HCT116 (cell line): ENCODE measurements at regions of chr2 and their contacts with region 1.

Region 1: GRCh38 chr2:33372940-33373553 is 103.4 kb upstream of the RASGRP3 start:
- DNase-seq: peak; percentile 47
- ATAC-seq: peak; percentile 79
- H3K4me3 ChIP-seq: no peak overlapping the region
- H3K27ac ChIP-seq: no peak overlapping the region
- H3K4me1 ChIP-seq: no peaks in the 10 kb centered on the region
- H3K27me3 ChIP-seq: no peaks in the 10 kb centered on the region
- CTCF ChIP-seq: peak; percentile 75 to 78 (median 77); a peak in 5 of 6 replicates
- POLR2A ChIP-seq: no peak
- RAD21 ChIP-seq: peak; percentile 79

Region 2: GRCh38 chr2:32553829-32554432 is 819.1 kb before region 1 on chr2:
- CTCF ChIA-PET with region 1: no interaction called
- POLR2A ChIA-PET with region 1: no interaction called
- RAD21 ChIA-PET with region 1: no interaction called
- intact Hi-C with region 1: loop called (anchors 5 kb)
- DNase-seq: peak; percentile 12
- ATAC-seq: peak; percentile 88
- H3K4me3 ChIP-seq: no peak overlapping the region
- H3K27ac ChIP-seq: no peak overlapping the region
- H3K4me1 ChIP-seq: no peaks in the 10 kb centered on the region
- H3K27me3 ChIP-seq: no peaks in the 10 kb centered on the region
- CTCF ChIP-seq: peak; percentile 54 to 77 (median 74); a peak in 5 of 6 replicates
- POLR2A ChIP-seq: no peak
- RAD21 ChIP-seq: peak; percentile 66

Region 3: DNA sequence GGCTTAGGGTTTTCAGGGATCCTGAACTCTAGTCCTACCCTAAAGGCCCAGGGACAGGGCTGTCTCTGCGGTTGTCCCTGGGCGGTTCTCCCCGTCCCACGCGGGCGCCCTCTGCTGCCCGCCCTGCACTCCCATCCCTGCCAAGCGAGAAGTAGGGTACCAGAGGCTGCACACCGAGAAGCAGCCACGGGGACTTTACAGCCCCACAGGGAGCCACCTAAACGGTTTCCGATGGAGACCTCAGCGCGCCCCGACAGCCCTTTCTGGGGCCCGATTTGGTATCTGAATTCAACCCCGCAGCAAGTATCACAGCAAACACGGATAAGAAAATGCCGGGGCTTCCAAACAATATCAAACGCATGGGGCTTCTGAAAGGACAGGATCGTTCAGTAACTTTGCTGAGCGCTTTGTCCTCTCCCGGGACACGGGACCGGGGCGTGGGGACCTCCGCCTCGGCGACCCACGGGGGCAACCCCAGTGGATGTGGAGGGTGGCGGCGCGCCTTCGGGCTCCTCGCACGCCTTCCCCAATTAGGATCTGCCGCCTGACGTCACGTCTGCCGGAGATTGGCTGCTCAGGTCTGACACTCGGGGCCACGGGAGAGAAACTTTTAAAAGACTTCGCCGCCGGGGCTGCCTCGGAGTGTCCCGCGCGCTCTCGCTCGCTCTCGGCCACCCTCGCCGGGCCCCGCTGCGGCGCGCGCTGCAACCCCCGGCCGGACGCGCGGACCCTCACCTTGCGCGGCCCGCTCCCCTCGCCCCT is 426.6 kb before region 1 on chr2 and contains the start of gene LTBP1:
- CTCF ChIA-PET with region 1: no interaction called
- POLR2A ChIA-PET with region 1: no interaction called
- RAD21 ChIA-PET with region 1: no interaction called
- intact Hi-C with region 1: loop called (anchors 5 kb)
- DNase-seq: peak; percentile 45
- ATAC-seq: peak; percentile 86
- H3K4me3 ChIP-seq: peak within 1 kb of the TSS; percentile 47 to 63
- H3K27ac ChIP-seq: peak within 1 kb of the TSS; percentile 44; the same call in 1 of the 2 replicates
- H3K4me1 ChIP-seq: peaks cover 0 to 16% of the 10 kb centered on the region in 2 experiments; a peak in 2 of 4 replicates
- H3K27me3 ChIP-seq: no peaks in the 10 kb centered on the region
- CTCF ChIP-seq: peak; percentile 68 to 88 (median 87)
- POLR2A ChIP-seq: no peak
- RAD21 ChIP-seq: peak; percentile 73
- total RNA-seq, gene LTBP1: 5.1 TPM